ENCODE measurements at regions of chr3 and their contacts with region 1.

Region 1: GRCh38 chr3:111803123-111803593 is 55.9 kb upstream of the PHLDB2 start:
- DNase-seq: peak; percentile 89 to 98
- H3K4me3 ChIP-seq: no peak overlapping the region
- H3K27ac ChIP-seq: peak overlapping the region; percentile 95
- H3K4me1 ChIP-seq: peaks cover 43% of the 10 kb centered on the region
- H3K27me3 ChIP-seq: no peaks in the 10 kb centered on the region
- CTCF ChIP-seq: no peak

Region 2: GRCh38 chr3:110881068-110881467 is 922.1 kb before region 1 on chr3:
- CTCF ChIA-PET with region 1: no interaction called
- POLR2A ChIA-PET with region 1: no interaction called
- intact Hi-C with region 1: no loop called
- DNase-seq: peak in 1 of 2 experiments; percentile 3
- H3K4me3 ChIP-seq: no peak overlapping the region
- H3K27ac ChIP-seq: no peak overlapping the region
- H3K4me1 ChIP-seq: no peaks in the 10 kb centered on the region
- H3K27me3 ChIP-seq: no peaks in the 10 kb centered on the region
- CTCF ChIP-seq: peak; percentile 48

Region 3: DNA sequence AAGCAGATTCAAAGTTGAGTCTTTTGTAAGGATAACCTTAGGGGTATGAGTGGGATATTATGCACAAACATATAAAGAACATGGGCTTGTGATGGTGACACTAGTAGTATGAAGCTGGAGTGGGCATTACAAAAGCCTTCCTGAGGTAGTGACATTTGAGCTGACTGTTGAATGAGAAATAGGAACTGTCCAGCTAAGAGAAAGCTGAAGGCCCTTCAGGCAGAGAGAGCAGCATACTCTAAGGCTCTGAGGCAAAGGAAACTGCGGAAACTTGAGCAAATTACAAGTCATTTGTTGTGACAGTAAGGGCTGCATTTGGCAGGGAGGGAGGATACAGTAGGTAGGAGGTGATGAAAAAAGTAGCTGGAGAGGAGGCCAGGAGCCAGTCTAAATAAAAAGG is 451.8 kb before region 1 on chr3:
- CTCF ChIA-PET with region 1: no interaction called
- POLR2A ChIA-PET with region 1: no interaction called
- intact Hi-C with region 1: no loop called
- DNase-seq: no peak
- H3K4me3 ChIP-seq: no peak overlapping the region
- H3K27ac ChIP-seq: no peak overlapping the region
- H3K4me1 ChIP-seq: no peaks in the 10 kb centered on the region
- H3K27me3 ChIP-seq: no peaks in the 10 kb centered on the region
- CTCF ChIP-seq: no peak

Region 4: GRCh38 chr3:111577794-111578685 is 225.1 kb before region 1 on chr3:
- CTCF ChIA-PET with region 1: no interaction called
- POLR2A ChIA-PET with region 1: no interaction called
- intact Hi-C with region 1: loop called (anchors 1 kb)
- DNase-seq: peak; percentile 40 to 79
- H3K4me3 ChIP-seq: no peak overlapping the region
- H3K27ac ChIP-seq: no peak overlapping the region
- H3K4me1 ChIP-seq: peaks cover 12% of the 10 kb centered on the region
- H3K27me3 ChIP-seq: no peaks in the 10 kb centered on the region
- CTCF ChIP-seq: peak; percentile 80

Region 5: DNA sequence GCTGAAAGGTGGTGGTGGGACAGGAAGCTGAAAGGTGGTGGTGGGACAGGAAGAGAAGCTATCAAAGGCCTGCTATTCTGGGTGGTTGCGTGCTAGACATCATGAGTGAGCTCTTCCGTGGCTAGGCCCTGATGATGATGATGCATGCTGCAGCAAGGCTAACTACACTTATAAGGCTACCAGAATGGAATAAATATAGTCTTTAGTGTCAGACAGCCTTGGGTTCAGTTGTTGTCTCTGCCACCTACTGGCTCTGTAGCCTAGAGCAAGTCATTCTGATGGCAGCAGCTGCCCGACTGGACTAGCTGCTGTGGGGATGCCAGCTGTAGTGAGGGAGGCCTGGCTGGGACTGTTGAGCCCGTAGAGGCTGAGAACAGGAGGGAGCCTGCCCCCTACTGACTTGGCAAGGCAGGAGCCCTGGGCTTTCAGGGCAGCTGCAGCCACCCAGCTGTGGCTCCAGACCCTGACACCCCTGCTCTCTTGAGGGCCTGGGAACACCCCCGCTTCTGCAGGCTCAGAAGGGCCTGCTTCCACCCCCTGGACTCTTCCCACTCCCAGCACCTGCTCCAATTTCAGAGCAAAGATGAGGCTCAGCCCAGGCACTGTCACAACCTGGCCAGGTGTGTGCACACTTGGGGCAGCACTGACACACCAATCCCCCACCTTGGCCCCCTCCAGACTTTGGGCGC is 186.6 kb before region 1 on chr3:
- CTCF ChIA-PET with region 1: no interaction called
- POLR2A ChIA-PET with region 1: no interaction called
- intact Hi-C with region 1: no loop called
- DNase-seq: peak; percentile 25 to 55
- H3K4me3 ChIP-seq: no peak overlapping the region
- H3K27ac ChIP-seq: no peak overlapping the region
- H3K4me1 ChIP-seq: no peaks in the 10 kb centered on the region
- H3K27me3 ChIP-seq: no peaks in the 10 kb centered on the region
- CTCF ChIP-seq: peak; percentile 55

Region 6: DNA sequence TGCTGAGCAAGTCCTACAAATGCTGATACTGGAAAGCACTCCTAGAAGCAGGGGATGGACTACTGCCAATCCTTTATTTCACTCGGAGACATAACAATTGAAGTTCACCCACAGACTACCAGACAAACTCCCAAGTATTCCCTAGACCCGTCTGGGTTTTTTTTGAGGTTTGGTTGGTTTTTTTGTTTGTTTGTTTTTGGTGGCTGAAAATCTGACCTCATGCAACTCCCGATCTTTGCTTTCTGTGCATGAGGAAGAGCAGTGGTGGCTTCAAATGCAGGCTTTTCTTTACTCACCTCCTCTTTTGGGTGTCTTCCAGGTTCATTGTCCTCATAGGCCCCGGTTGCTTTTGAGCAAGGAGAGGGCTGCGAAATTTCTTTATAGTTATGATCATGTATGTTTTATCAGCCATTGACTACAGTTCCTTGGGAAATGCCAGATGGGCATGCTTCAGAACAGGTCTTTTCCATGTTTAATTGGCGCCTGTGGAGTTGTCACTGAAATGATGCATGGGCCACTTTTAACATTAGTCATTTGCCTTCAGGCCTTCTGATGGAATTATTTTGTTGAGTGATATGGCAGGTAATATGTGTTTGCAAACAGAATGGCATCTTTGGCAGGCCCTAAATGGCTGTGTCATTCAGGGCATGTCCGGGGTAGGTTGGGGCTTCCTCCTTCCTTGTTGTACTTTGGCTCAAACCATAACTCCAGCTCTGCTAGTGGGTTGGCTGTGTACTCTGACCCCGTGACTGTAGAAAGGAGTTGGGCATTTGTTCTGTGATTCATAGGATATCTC is 126.7 kb before region 1 on chr3:
- CTCF ChIA-PET with region 1: no interaction called
- POLR2A ChIA-PET with region 1: interaction called, 4 read pairs
- intact Hi-C with region 1: loop called (anchors 1 kb)
- DNase-seq: peak; percentile 92 to 100
- H3K4me3 ChIP-seq: peak overlapping the region; percentile 62
- H3K27ac ChIP-seq: peak overlapping the region; percentile 83
- H3K4me1 ChIP-seq: peaks cover 44% of the 10 kb centered on the region
- H3K27me3 ChIP-seq: no peaks in the 10 kb centered on the region
- CTCF ChIP-seq: no peak

Region 7: DNA sequence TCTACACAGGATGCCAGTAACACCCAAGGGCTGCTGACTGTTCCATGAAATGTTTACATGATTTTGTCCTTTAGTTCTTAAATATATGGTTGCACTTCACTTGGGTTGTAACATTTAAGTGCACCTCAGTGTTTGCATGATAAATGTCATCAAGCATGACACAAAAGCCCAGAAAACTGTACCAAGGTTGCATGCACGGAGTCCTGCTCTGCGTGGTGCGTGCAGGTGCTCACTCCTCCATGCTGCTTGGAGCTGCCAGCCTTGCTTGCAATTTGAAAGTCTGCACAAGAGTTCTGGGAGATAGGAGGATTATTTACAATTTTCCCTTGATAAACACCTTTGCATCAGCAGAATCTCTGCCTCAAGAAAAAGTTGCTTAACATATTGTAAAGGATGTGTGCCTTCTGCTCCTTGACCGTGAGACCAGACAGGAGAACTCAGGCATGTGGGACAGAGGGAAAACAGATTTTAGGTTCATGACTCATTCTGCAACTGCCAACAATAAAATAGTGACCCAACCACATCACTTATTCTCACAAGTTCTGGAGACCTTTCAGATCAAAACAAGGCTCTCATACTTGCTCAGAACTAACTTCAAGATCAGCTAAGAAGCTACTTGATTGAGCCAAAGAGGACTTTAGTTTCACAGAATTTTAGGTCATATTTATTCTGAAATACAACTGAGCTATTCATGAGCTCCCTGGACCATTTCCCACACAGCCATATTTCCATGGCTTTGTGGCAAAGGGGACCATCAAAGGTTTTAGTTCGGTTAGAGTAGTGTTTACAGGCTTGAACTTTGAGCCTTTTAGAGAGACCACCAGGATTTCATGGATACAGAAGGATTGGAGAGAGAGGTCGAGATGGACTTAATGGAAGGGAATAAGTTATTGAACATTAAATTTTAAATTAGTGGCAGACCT is 79.6 kb before region 1 on chr3:
- CTCF ChIA-PET with region 1: no interaction called
- POLR2A ChIA-PET with region 1: no interaction called
- intact Hi-C with region 1: loop called (anchors 1 kb)
- DNase-seq: peak in 1 of 2 experiments; percentile 94
- H3K4me3 ChIP-seq: no peak overlapping the region
- H3K27ac ChIP-seq: peak overlapping the region; percentile 74
- H3K4me1 ChIP-seq: peaks cover 28% of the 10 kb centered on the region
- H3K27me3 ChIP-seq: no peaks in the 10 kb centered on the region
- CTCF ChIP-seq: no peak

Region 8: DNA sequence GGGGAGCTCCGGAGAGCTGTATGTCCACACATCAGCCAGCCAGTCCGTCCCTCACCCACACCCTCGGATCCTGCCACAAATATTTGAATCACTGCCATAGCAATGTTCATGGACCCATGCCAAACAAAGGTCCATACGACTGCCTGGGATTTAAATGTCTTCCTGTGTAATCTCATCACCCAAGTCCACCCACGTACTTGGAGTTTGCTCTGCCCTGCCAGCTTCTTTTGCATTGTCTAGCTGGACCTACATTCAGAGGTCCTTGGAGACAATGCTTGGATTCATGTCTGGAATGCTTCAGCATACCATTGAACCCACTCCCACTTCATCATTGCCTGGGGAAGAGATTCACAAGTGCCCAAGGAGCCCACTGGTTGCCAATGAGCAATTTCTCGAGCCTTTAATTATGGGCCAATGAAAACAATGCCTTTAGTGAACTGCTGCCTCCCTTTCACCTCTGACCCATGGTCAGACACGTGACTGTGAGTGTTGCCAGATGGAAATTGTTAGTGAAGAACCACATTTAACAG is 34.5 kb before region 1 on chr3:
- CTCF ChIA-PET with region 1: no interaction called
- POLR2A ChIA-PET with region 1: interaction called, 3 read pairs
- intact Hi-C with region 1: loop called (anchors 2 kb)
- DNase-seq: peak in 1 of 2 experiments; percentile 54
- H3K4me3 ChIP-seq: no peak overlapping the region
- H3K27ac ChIP-seq: no peak overlapping the region
- H3K4me1 ChIP-seq: peaks cover 10% of the 10 kb centered on the region; the same call in 1 of the 2 replicates
- H3K27me3 ChIP-seq: no peaks in the 10 kb centered on the region
- CTCF ChIP-seq: no peak

Region 9: GRCh38 chr3:111904376-111905241 is 101.5 kb after region 1 on chr3:
- CTCF ChIA-PET with region 1: no interaction called
- POLR2A ChIA-PET with region 1: no interaction called
- intact Hi-C with region 1: loop called (anchors 1 kb)
- DNase-seq: peak; percentile 47 to 99
- H3K4me3 ChIP-seq: no peak overlapping the region; the same call in 1 of the 2 replicates
- H3K27ac ChIP-seq: peak overlapping the region; percentile 96
- H3K4me1 ChIP-seq: peaks cover 55% of the 10 kb centered on the region
- H3K27me3 ChIP-seq: no peaks in the 10 kb centered on the region
- CTCF ChIP-seq: peak; percentile 30

Region 10: GRCh38 chr3:111967651-111968274 is 164.6 kb after region 1 on chr3:
- CTCF ChIA-PET with region 1: interaction called, 3 read pairs
- POLR2A ChIA-PET with region 1: no interaction called
- intact Hi-C with region 1: loop called (anchors 2 kb)
- DNase-seq: peak; percentile 71 to 85
- H3K4me3 ChIP-seq: no peak overlapping the region
- H3K27ac ChIP-seq: peak overlapping the region; percentile 54
- H3K4me1 ChIP-seq: peaks cover 25% of the 10 kb centered on the region
- H3K27me3 ChIP-seq: no peaks in the 10 kb centered on the region
- CTCF ChIP-seq: peak; percentile 99